Esophagus muscularis mucosa (tissue), 4 donors: ENCODE measurements at regions of chr5 and their contacts with region 1.

Region 1: DNA sequence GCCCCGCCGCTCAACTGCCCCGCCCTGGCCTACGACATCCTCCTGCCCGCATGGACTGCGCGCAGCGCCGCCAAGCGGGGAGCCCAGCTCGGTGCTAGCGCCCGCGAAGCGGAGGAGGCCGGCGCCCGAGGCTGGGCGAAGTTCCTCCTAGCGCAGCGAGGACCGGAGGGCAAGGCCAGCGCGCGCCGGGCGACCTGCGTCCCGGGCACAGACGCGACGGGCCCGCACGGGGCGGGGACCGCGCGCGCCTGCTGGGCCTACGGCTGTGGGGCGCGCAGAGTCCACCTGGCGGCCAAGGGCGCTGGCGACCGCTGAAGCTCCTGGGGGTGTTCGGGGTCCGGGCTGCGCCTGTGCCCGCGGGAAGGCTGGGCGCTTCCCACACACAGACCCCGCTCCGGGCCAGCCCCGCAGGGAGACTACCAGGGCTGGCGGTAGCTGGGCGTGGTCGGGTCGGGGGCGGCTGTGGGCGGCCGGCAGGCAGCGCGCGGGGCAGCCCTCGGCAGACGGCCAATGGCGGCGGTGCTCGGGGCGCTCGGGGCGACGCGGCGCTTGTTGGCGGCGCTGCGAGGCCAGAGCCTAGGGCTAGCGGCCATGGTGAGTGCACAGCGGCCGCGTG is at the start of gene PCBD2:
- DNase-seq: peak; percentile 94
- H3K4me3 ChIP-seq: peak within 1 kb of the TSS; percentile 73 to 98 (median 86)
- H3K27ac ChIP-seq: peak within 1 kb of the TSS; percentile 97 to 98 (median 98)
- H3K4me1 ChIP-seq: peaks cover 0 to 6% (median 6%) of the 10 kb centered on the region in 4 donors
- H3K27me3 ChIP-seq: no peaks in the 10 kb centered on the region
- CTCF ChIP-seq: peak; percentile 88 to 98 (median 89)
- EP300 ChIP-seq: no peak
- POLR2A ChIP-seq: no peak
- total RNA-seq, gene PCBD2: 6.8 to 11.6 (median 10.4) TPM

Region 2: DNA sequence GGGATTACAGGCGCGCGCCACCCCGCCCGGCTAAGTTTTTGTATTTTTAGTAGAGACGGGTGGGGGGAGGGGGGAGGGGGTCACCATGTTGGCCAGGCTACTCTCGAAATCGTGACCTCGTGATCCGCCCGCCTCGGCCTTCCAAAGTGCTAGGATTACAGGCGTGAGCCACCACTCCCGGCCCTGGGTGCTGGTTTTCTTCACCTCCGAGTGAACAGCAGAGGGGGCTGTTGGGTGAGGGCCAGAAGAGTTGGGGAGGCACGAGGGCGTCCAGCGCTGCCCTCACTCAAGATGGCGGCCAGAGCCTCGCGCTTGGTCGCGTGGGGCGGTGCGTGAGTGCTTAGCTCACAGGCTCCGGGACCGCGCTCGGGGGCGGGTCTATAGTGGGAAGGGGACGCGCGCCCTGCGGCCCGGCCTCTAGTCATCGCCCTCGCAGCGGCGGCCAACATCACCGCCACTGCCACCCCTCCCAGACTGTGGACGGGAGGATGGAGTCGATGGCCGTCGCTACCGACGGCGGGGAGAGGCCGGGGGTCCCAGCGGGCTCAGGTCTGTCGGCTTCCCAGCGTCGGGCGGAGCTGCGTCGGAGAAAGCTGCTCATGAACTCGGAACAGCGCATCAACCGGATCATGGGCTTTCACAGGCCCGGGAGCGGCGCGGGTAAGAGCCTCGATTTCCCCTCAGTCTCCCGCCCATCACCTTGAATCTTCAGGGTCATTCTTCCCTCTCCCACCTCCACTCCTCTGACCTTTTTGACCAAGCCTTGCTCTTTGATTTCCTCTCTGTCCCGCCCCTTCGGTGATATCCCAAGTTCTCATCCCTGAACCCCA is 166.4 kb before region 1 on chr5 and contains the start of gene CAMLG:
- intact Hi-C with region 1: loop called (anchors 2 kb)
- DNase-seq: peak; percentile 99
- H3K4me3 ChIP-seq: peak within 1 kb of the TSS; percentile 74 to 90 (median 82)
- H3K27ac ChIP-seq: peak within 1 kb of the TSS; percentile 92 to 98 (median 94)
- H3K4me1 ChIP-seq: peaks cover 16 to 46% (median 37%) of the 10 kb centered on the region in 4 donors
- H3K27me3 ChIP-seq: no peaks in the 10 kb centered on the region
- CTCF ChIP-seq: peak; percentile 21 to 49 (median 38)
- EP300 ChIP-seq: no peak
- POLR2A ChIP-seq: peak; percentile 95
- total RNA-seq, gene CAMLG: 38.5 to 54.4 (median 49.8) TPM

Region 3: GRCh38 chr5:134845852-134846640 is 58.7 kb before region 1 on chr5 and contains the start of gene C5orf24:
- intact Hi-C with region 1: loop called (anchors 2 kb)
- DNase-seq: peak; percentile 96
- H3K4me3 ChIP-seq: peak within 1 kb of the TSS; percentile 82 to 97 (median 92)
- H3K27ac ChIP-seq: peak within 1 kb of the TSS; percentile 95 to 99 (median 97)
- H3K4me1 ChIP-seq: peaks cover 40 to 54% (median 51%) of the 10 kb centered on the region in 4 donors
- H3K27me3 ChIP-seq: no peaks in the 10 kb centered on the region
- CTCF ChIP-seq: peak in 1 of 3 experiments; percentile 15
- EP300 ChIP-seq: no peak
- POLR2A ChIP-seq: peak; percentile 74
- total RNA-seq, gene C5orf24: 54.0 to 76.4 (median 61.6) TPM

Region 4: GRCh38 chr5:134873987-134874830 is 30.5 kb before region 1 on chr5 and contains the start of gene TXNDC15:
- intact Hi-C with region 1: loop called (anchors 2 kb)
- DNase-seq: peak; percentile 94
- H3K4me3 ChIP-seq: peak within 1 kb of the TSS; percentile 83 to 99 (median 98)
- H3K27ac ChIP-seq: peak within 1 kb of the TSS; percentile 94 to 99 (median 98)
- H3K4me1 ChIP-seq: peaks cover 17 to 43% (median 32%) of the 10 kb centered on the region in 4 donors
- H3K27me3 ChIP-seq: no peaks in the 10 kb centered on the region
- CTCF ChIP-seq: no peak
- EP300 ChIP-seq: no peak
- POLR2A ChIP-seq: no peak
- total RNA-seq, gene TXNDC15: 71.4 to 123 (median 93.9) TPM